HepG2 (cell line): ENCODE measurements at regions of chr2 and their contacts with region 1.

Region 1: GRCh38 chr2:199459286-199460016 is 1.7 kb upstream of the SATB2 start:
- DNase-seq: peak; percentile 88
- ATAC-seq: peak; percentile 51
- H3K4me3 ChIP-seq: peak overlapping the region; percentile 67 to 90 (median 68)
- H3K27ac ChIP-seq: peak overlapping the region; percentile 72
- H3K4me1 ChIP-seq: peaks cover 49% of the 10 kb centered on the region
- H3K27me3 ChIP-seq: peaks cover 5 to 61% of the 10 kb centered on the region in 2 experiments; a peak in 4 of 5 replicates
- CTCF ChIP-seq: peak; percentile 27; the same call in 1 of the 2 replicates
- EP300 ChIP-seq: no peak
- POLR2A ChIP-seq: peak; percentile 52 to 54; a peak in 2 of 4 replicates
- RAD21 ChIP-seq: peak; percentile 34; the same call in 1 of the 2 replicates

Region 2: GRCh38 chr2:199019898-199020507 is 439.4 kb before region 1 on chr2:
- CTCF ChIA-PET with region 1: no interaction called
- POLR2A ChIA-PET with region 1: no interaction called
- in situ Hi-C with region 1: no loop called
- intact Hi-C with region 1: loop called (anchors 5 kb)
- DNase-seq: peak; percentile 13
- ATAC-seq: peak; percentile 91
- H3K4me3 ChIP-seq: no peak overlapping the region
- H3K27ac ChIP-seq: no peak overlapping the region
- H3K4me1 ChIP-seq: no peaks in the 10 kb centered on the region
- H3K27me3 ChIP-seq: no peaks in the 10 kb centered on the region
- CTCF ChIP-seq: peak; percentile 47
- EP300 ChIP-seq: no peak
- POLR2A ChIP-seq: no peak
- RAD21 ChIP-seq: no peak

Region 3: GRCh38 chr2:199405241-199405640 is 54.2 kb before region 1 on chr2:
- CTCF ChIA-PET with region 1: interaction called, 3 read pairs
- POLR2A ChIA-PET with region 1: no interaction called
- in situ Hi-C with region 1: no loop called
- intact Hi-C with region 1: loop called (anchors 2 kb)
- DNase-seq: peak; percentile 29
- ATAC-seq: peak; percentile 84
- H3K4me3 ChIP-seq: no peak overlapping the region
- H3K27ac ChIP-seq: no peak overlapping the region
- H3K4me1 ChIP-seq: no peaks in the 10 kb centered on the region
- H3K27me3 ChIP-seq: no peaks in the 10 kb centered on the region
- CTCF ChIP-seq: peak; percentile 37
- EP300 ChIP-seq: no peak
- POLR2A ChIP-seq: no peak
- RAD21 ChIP-seq: no peak